ENCODE measurements at regions of chr16 and their contacts with region 1.

Region 1: DNA sequence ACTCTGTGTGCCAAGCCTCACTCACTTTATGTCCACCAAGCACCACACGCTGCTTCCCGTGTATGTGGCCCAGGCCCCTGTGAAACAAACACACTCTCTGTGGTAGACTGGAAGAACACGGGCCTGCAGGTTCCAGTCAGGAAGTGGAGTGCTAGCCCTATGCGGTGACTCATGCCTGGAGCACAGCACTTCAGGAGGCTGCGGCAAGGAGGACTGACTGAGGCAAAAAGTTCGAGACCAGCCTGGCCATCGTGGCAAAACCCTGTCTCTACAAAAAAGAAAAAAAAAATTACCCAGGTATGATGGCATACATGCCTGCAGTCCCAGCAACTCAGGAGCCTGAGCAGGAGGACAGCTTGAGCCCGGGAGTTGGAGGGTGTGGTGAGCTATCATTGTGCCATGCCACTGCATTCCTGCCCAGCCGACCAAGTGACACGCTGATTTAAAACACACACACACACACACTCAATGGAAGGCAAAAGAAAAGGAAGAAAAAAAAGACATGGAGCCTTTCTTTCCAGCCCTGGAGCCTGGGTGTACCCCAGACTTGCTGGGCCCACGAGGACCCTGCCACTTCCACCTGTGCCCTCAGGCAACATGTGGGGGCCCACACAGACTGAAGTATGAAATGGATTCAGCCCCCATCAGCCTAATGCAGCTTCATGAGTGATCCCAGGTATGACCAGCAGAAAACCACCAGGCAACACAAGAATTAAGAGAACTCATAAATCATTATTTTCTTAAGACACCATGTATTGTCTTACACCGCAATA is 126.6 kb downstream of the ANKRD11 start:
- DNase-seq: no peak
- ATAC-seq: no peak
- H3K4me3 Mint-ChIP-seq: no peak overlapping the region
- H3K27ac Mint-ChIP-seq: peak overlapping the region; percentile 31
- H3K4me1 Mint-ChIP-seq: peaks cover 98% of the 10 kb centered on the region
- H3K27me3 Mint-ChIP-seq: no peaks in the 10 kb centered on the region
- CTCF ChIP-seq: no peak

Region 2: DNA sequence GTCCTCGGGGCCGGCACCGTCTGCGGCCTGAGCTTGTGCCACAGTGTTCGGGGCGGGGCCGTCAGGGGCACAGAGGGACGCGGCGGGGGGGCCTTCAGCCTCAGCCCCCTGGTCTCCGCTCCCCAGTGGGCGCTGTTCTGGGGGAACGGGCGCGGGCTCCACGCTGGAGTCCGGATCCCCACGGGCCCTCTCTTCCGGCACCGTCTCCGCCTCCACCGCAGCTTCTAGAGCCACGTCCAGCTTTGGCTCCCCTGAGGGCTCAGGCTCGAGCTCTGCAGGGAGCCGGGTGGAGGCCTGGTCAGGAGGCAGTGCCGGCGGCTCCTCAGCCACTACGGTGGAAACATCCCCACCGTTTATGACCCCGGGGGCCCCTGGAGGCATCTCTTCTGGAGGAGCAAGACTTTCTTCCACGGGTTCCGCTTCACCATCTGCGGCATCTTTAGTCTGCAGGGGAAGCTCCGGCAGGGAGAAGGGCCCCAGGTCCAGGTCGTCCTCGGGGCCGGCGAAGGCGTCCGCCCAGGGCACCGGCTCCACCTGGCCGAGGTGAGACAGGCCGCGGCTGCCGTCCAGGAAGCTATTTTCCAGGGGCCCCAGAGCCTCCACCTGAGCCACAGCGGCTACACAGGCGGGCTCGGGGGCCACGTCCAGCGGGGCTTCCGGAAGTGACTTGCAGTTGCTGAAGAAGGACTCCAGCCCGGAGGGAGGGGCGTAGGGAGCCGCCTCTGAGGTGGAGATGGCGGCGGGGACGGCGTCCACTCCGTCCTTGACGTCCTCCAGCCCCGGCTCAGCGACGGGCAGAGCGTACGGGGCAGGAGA is 83.9 kb before region 1 on chr16:
- CTCF ChIA-PET with region 1: no interaction called
- POLR2A ChIA-PET with region 1: no interaction called
- intact Hi-C with region 1: no loop called
- DNase-seq: no peak
- ATAC-seq: no peak
- H3K4me3 Mint-ChIP-seq: no peak overlapping the region
- H3K27ac Mint-ChIP-seq: no peak overlapping the region
- H3K4me1 Mint-ChIP-seq: no peaks in the 10 kb centered on the region
- H3K27me3 Mint-ChIP-seq: no peaks in the 10 kb centered on the region
- CTCF ChIP-seq: no peak

Region 3: GRCh38 chr16:89308390-89309333 is 55.1 kb before region 1 on chr16:
- CTCF ChIA-PET with region 1: no interaction called
- POLR2A ChIA-PET with region 1: no interaction called
- intact Hi-C with region 1: loop called (anchors 10 kb)
- DNase-seq: no peak
- ATAC-seq: peak; percentile 53
- H3K4me3 Mint-ChIP-seq: no peak overlapping the region
- H3K27ac Mint-ChIP-seq: no peak overlapping the region
- H3K4me1 Mint-ChIP-seq: peaks cover 43% of the 10 kb centered on the region
- H3K27me3 Mint-ChIP-seq: no peaks in the 10 kb centered on the region
- CTCF ChIP-seq: no peak

Region 4: GRCh38 chr16:89325861-89326471 is 37.8 kb before region 1 on chr16:
- CTCF ChIA-PET with region 1: no interaction called
- POLR2A ChIA-PET with region 1: no interaction called
- intact Hi-C with region 1: loop called (anchors 5 kb)
- DNase-seq: no peak
- ATAC-seq: peak; percentile 53
- H3K4me3 Mint-ChIP-seq: peak overlapping the region; percentile 2
- H3K27ac Mint-ChIP-seq: peak overlapping the region; percentile 8
- H3K4me1 Mint-ChIP-seq: peaks cover 75% of the 10 kb centered on the region
- H3K27me3 Mint-ChIP-seq: no peaks in the 10 kb centered on the region
- CTCF ChIP-seq: no peak

Region 5: GRCh38 chr16:89374393-89374960 is 10.7 kb after region 1 on chr16:
- CTCF ChIA-PET with region 1: no interaction called
- POLR2A ChIA-PET with region 1: interaction called, 10 read pairs
- intact Hi-C with region 1: loop called (anchors 2 kb)
- DNase-seq: no peak
- ATAC-seq: no peak
- H3K4me3 Mint-ChIP-seq: peak overlapping the region; percentile 72
- H3K27ac Mint-ChIP-seq: peak overlapping the region; percentile 65
- H3K4me1 Mint-ChIP-seq: peaks cover 84% of the 10 kb centered on the region
- H3K27me3 Mint-ChIP-seq: no peaks in the 10 kb centered on the region
- CTCF ChIP-seq: no peak

Region 6: DNA sequence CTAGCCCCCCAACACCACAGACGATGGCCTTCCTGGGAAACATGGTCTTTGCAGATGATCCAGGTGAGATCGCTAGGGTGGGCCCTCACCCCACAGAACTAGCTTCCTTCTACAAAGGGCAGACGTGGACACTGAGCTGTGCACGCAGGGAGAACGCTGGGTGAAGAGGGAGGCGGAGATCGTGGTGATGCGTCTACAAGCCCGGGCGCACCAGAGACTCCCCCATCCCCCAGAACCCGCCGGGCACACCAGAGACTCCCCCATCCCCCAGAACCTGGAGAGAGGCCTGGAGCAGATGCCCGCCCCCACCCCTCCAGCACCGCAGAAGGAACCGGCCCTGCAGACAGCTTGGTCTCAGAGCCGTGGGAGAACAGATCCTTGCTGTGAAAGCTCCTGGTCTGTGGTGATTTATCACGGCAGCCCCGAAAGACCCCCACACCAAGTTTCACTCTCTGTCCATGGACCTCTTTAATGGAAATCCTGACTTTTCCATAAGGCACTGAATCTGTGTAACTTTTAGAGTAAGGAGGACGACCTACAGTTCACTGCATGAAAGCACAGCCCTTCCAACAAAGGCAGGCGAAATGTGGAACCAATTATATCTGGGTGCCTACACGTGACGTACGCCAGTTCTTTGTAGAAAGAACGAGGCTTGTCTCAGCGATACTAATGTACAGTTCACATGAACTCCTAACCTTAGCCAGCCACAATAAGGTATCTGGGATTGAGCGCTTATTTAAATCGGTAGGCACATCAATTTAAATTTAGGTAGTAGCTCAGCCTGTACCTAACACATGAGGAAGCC is 38.0 kb after region 1 on chr16:
- CTCF ChIA-PET with region 1: no interaction called
- POLR2A ChIA-PET with region 1: no interaction called
- intact Hi-C with region 1: loop called (anchors 5 kb)
- DNase-seq: no peak
- ATAC-seq: no peak
- H3K4me3 Mint-ChIP-seq: no peak overlapping the region
- H3K27ac Mint-ChIP-seq: peak overlapping the region; percentile 24
- H3K4me1 Mint-ChIP-seq: peaks cover 62% of the 10 kb centered on the region
- H3K27me3 Mint-ChIP-seq: no peaks in the 10 kb centered on the region
- CTCF ChIP-seq: no peak

Region 7: DNA sequence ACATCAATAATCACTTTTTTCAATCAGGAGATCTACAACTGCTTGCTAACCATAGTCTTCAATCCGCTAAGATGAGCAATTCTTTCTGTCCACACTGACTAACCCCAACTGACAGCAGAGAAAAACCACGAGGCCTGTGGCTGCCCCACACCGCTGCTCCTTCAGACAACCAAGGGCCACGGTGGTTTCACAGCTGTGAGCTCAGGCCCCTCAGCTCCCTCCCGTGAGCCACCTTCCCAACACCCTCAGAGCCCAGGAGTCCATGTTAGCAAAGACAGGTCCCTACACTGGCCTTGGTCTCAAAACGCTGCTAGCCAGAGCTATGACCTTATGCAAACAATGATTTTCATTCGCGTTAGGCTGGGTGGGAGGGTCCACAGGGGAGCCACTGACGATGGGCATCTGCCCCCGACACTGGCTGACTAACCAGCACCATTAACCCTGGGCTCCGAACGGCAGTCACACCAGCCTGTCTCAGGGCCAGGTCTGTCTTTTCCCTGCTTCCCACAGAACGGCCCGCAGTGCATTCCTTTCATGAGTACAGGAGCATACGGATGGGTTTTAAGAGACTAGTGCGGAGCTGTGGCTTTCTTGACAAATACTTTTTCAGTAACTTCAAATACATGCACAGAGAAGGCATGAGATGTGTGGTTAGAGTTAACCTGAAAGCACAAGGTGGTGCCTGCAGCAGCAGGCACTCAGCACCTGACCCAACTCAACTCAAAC is 59.3 kb after region 1 on chr16:
- CTCF ChIA-PET with region 1: no interaction called
- POLR2A ChIA-PET with region 1: no interaction called
- intact Hi-C with region 1: loop called (anchors 10 kb)
- DNase-seq: no peak
- ATAC-seq: peak; percentile 77
- H3K4me3 Mint-ChIP-seq: peak overlapping the region; percentile 67
- H3K27ac Mint-ChIP-seq: peak overlapping the region; percentile 71
- H3K4me1 Mint-ChIP-seq: peaks cover 75% of the 10 kb centered on the region
- H3K27me3 Mint-ChIP-seq: no peaks in the 10 kb centered on the region
- CTCF ChIP-seq: no peak

Measured in activated B cell treated with CpG ODN at 0.5 μM for 24 hours (primary cell).